Endothelial cell of umbilical vein (primary cell): ENCODE measurements at regions of chr6 and their contacts with region 1.

Region 1: GRCh38 chr6:39361657-39362486 is 39.4 kb upstream of the KCNK16 start:
- DNase-seq: peak; percentile 53
- H3K4me3 ChIP-seq: no peak overlapping the region
- H3K27ac ChIP-seq: no peak overlapping the region
- H3K4me1 ChIP-seq: no peaks in the 10 kb centered on the region
- H3K27me3 ChIP-seq: no peaks in the 10 kb centered on the region
- CTCF ChIP-seq: peak; percentile 65 to 85
- POLR2A ChIP-seq: no peak

Region 2: GRCh38 chr6:39347906-39348585 is 13.8 kb before region 1 on chr6:
- CTCF ChIA-PET with region 1: interaction called, 15 read pairs
- POLR2A ChIA-PET with region 1: no interaction called
- dilution Hi-C with region 1: no loop called
- intact Hi-C with region 1: no loop called
- DNase-seq: peak; percentile 56
- H3K4me3 ChIP-seq: no peak overlapping the region
- H3K27ac ChIP-seq: no peak overlapping the region
- H3K4me1 ChIP-seq: no peaks in the 10 kb centered on the region
- H3K27me3 ChIP-seq: no peaks in the 10 kb centered on the region
- CTCF ChIP-seq: peak; percentile 78 to 87
- POLR2A ChIP-seq: no peak

Region 3: DNA sequence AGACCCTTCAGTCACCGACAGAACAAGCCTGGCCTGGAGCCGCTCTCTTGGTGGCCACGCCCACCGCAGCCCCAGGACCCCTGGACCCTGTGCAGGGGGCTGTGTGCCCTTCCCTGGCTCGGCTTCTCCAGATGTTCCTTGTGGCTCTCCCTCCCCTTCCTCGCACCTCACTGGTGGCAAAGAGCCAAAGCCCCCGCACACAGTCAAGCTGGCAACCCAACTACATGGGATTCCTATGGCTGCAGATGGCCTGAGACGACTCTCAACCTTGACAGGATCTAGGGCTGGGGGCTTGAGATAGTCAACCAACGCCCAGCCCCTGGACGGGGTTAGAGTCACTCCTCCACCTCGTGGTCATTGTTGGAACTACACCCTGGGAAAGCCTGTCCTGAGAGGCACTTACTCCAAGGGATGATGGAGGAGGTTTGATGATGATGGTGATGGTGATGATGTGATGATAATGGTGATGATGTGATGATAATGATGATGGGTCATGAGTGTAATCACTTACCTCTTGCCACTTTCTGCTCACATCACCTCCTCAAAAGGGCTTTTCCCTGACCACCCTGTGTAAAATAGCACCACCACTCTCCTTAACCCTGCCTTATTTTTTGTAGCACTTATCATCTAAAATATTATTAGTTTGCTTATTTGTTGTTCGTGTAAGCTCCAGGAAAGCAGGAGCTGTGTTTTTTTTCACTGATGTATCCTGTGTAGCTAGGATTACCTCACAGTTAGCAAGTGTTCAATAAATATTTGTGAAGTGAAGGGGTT is 946.8 kb after region 1 on chr6:
- CTCF ChIA-PET with region 1: interaction called, 3 read pairs
- POLR2A ChIA-PET with region 1: no interaction called
- dilution Hi-C with region 1: no loop called
- intact Hi-C with region 1: loop called (anchors 1 kb)
- DNase-seq: peak; percentile 43
- H3K4me3 ChIP-seq: no peak overlapping the region
- H3K27ac ChIP-seq: no peak overlapping the region
- H3K4me1 ChIP-seq: no peaks in the 10 kb centered on the region
- H3K27me3 ChIP-seq: no peaks in the 10 kb centered on the region
- CTCF ChIP-seq: peak; percentile 74 to 82
- POLR2A ChIP-seq: no peak